Activated naive CD8-positive, alpha-beta T cell treated with anti-CD3 and anti-CD28 coated beads, Interleukin-2, amount 10 ng/mL, durations not matched to agents 7 days and 5 days (primary cell): ENCODE measurements at regions of chr17 and their contacts with region 1.

Region 1: DNA sequence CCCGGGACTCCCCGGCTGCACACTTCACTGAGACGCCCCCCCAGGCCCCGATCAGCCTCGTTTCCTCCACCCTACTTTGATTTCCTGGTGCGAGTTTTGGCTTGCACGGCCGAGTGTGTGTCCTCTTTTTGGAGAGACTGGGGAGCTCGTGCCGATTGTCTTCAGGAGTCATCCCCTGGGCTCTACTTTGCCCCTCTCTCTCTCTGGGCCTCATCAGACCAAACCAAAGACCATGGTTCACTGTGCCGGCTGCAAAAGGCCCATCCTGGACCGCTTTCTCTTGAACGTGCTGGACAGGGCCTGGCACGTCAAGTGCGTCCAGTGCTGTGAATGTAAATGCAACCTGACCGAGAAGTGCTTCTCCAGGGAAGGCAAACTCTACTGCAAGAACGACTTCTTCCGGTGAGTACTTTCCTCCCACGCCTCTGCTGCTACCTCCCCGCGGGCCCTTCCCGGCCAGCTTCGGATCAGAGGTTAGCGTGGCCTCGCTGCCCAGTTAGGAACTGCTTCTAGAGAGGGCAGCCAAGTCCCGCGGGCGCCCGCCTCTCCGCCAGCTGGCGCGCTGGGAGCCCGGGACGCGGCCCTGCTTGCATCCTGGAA is 791 bp downstream of the LHX1 start:
- DNase-seq: peak; percentile 45
- ATAC-seq: no peak
- H3K4me3 Mint-ChIP-seq: peak overlapping the region; percentile 61
- H3K27ac Mint-ChIP-seq: peak overlapping the region; percentile 48
- H3K4me1 Mint-ChIP-seq: peaks cover 43% of the 10 kb centered on the region
- H3K27me3 Mint-ChIP-seq: peaks cover 81% of the 10 kb centered on the region

Region 2: DNA sequence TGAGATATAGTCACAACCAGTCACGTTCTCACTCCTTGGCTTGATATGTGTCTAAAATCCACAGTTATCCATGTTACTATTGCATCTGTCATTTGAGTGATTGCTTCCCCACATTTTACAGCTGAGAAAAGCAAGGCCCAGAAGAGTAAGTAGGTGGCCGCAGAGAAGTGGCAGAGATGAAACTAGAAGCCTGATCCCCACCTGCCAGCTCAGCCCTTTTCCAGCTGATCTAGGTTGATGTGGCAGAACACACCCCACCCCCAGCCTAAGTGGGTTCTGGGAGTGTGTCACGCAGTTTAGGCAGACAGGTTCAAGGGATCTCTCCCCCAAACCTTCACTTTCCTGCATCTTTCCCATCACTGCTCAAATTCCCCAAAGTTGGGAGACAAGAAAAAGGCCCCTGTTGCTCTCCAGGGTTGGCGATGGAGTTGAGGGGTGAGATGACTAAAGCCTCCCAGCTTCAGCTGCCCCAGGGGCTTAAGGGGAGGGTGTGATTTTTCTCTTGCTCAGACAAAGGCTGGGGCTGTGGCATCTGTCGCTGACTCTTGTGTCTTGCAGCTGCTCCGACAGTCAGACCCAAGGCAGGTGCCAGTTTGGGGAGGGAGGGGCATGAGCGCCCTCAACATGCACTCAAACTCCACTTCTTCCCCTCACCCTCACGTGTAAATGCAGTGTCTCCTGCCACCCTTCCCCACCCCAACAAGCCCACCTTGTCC is 49.7 kb before region 1 on chr17:
- POLR2A ChIA-PET with region 1: no interaction called
- DNase-seq: no peak
- ATAC-seq: no peak
- H3K4me3 Mint-ChIP-seq: no peak overlapping the region
- H3K27ac Mint-ChIP-seq: no peak overlapping the region
- H3K4me1 Mint-ChIP-seq: no peaks in the 10 kb centered on the region
- H3K27me3 Mint-ChIP-seq: peaks cover 31% of the 10 kb centered on the region

Region 3: GRCh38 chr17:36948717-36949460 is 10.8 kb after region 1 on chr17 and contains the start of gene AATF:
- POLR2A ChIA-PET with region 1: interaction called, 14 read pairs
- DNase-seq: peak; percentile 99
- ATAC-seq: peak; percentile 97
- H3K4me3 Mint-ChIP-seq: peak within 1 kb of the TSS; percentile 96
- H3K27ac Mint-ChIP-seq: peak within 1 kb of the TSS; percentile 96
- H3K4me1 Mint-ChIP-seq: peaks cover 47% of the 10 kb centered on the region
- H3K27me3 Mint-ChIP-seq: peaks cover 39% of the 10 kb centered on the region
- total RNA-seq, gene AATF: 67.1 to 71.6 TPM